GM13976 (cell line): ENCODE measurements at regions of chr1 and their contacts with region 1.

Region 1: DNA sequence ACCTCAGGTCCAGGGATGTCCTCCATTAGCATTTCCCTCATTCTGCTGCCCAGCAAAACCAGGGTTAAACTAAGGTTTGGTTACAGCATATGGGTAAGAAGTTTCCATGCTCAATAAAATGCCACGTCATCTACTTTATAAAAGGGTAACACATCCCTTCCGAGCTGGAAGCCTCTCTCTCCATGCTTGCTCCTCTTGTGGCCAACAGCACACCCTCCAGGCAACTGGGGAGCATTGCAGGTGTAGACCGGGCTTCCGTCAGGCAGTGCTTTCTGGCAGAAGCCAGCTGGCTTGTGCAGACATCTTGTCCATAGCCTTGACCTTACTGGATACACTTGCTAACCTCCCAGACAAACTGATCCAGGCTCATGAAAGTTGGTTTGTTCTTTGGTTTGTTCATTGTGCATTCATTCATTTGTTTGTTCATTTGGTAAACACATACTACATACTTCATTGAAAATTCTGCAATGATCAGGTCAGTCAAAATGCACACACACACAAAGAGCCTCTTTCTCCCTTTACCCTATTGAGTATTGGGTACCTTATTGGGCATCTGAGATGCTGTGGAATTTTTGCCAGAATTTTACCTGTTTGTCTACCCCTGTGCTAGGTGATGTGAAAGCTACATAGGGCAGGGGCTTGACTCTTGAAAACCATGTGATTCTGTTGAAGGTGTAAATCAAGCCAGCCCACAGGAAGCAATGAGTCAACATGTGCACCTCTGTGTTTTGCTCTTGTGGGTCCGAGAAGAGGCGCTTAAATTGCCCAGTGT is 422.8 kb downstream of the CAMTA1 start:
- DNase-seq: peak; percentile 66
- CTCF ChIP-seq: peak; percentile 46

Region 2: DNA sequence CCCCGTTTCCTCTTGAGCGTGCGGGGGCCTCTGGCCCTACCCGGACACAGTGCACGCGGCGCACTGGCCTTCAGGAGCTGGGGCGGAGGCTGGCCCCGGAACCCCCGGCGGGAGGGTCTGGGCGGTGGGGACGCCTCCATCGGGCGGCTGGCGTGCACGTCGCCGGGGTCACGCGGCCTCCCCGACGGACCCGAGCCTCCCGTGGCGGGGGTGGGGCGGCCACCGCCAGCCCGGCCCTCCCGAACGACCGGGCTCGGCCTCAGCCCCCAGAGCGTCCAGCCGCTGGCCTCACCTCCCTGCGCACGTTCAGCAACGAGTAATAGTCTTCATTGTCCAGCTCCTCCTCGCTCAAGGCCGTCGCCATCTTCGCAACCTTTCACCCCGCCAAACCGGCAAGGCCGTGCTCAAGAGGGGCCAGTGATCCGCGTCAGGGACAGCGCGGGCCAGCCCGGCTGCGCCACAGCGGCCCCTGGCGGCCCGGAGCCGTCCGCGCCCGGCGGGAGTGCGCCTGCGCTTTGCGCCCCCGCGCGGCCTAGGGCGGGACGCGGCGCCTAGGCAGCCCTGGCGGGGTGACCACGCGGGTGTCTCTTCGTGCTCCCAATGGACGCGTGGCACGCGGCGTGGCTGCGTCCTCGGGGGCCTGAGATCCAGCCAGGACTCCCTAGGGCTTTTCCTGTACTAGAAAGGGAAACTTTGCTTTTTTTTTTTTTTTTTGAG is 506.5 kb before region 1 on chr1 and contains the start of gene DNAJC11:
- in situ Hi-C with region 1: loop called (anchors 25 kb)
- DNase-seq: peak; percentile 97
- CTCF ChIP-seq: peak; percentile 100